Caco-2 (cell line): ENCODE measurements at regions of chr1 and their contacts with region 1.

Region 1: DNA sequence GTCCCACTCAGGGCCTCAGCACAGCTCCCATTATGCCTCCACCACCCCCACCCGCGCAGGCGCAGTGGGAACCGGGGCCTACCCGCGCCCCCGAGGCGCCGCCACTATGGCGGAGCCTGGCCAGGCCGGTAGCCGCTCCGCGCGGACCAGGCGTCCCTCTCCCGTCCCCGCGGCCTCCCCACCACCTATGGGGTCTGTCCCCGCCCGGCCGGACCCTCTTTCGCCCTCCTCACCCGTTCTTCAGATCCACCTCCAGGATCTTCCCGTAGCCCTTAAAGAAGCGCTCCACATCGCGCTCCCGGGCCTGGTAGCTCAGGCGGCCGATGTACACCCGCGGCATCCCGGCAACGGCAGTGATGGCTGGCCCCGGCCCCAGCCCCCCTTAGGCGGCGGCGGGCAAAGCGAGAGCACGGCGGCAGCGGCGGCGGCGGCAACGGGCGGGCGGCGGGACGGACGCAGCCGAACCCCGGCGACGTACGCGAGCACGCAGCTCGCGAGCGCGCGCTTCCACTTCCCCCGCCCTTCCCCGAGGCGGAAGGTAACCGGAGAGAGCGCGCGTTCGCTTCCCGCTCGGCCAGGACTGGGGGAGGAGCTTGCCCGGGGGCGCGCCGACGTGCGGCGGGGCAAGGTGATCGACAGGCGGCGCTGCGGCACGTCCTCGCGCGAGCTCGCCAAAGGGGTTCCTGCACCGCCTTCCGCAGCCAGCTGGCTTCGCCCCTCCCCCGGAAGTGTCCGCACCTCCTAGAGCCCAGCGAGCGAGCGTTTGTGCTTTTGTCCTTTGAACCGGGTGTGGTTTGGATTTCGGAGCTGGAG is at the start of gene SRSF4:
- DNase-seq: peak; percentile 97
- H3K4me3 ChIP-seq: peak within 1 kb of the TSS; percentile 88
- H3K4me3 Mint-ChIP-seq: peak within 1 kb of the TSS; percentile 74
- H3K27ac Mint-ChIP-seq: peak within 1 kb of the TSS; percentile 60
- H3K4me1 ChIP-seq: peaks cover 21% of the 10 kb centered on the region
- H3K4me1 Mint-ChIP-seq: peaks cover 20% of the 10 kb centered on the region
- H3K27me3 ChIP-seq: no peaks in the 10 kb centered on the region
- H3K27me3 Mint-ChIP-seq: no peaks in the 10 kb centered on the region
- CTCF ChIP-seq: peak; percentile 45 to 56
- total RNA-seq, gene SRSF4: 44.1 and 45.8 TPM in 2 replicates

Region 2: DNA sequence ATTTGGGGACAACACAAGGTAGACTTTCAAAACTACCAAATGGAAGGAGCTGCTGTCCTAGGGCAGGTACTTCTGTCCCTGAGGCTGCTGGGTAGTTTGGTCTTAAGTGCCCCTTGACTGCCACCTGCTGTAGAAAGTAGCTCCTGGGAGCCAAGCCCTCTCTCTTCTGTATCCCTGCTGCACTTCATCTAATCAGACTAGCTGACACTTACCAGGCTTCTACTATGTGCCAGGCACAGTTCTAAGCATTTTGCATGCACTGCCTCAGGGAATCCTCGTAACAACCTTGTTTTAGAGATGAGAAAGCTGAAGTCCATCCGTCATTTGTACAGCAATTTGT is 15.9 kb after region 1 on chr1:
- CTCF ChIA-PET with region 1: interaction called, 28 read pairs
- POLR2A ChIA-PET with region 1: interaction called, 16 read pairs
- intact Hi-C with region 1: loop called (anchors 1 kb)
- DNase-seq: peak; percentile 53 to 55
- H3K4me3 ChIP-seq: no peak overlapping the region
- H3K4me3 Mint-ChIP-seq: no peak overlapping the region
- H3K27ac Mint-ChIP-seq: no peak overlapping the region
- H3K4me1 ChIP-seq: peaks cover 12% of the 10 kb centered on the region
- H3K4me1 Mint-ChIP-seq: no peaks in the 10 kb centered on the region
- H3K27me3 ChIP-seq: no peaks in the 10 kb centered on the region
- H3K27me3 Mint-ChIP-seq: no peaks in the 10 kb centered on the region
- CTCF ChIP-seq: peak; percentile 29 to 46